Calu3 (cell line): ENCODE measurements at regions of chr12 and their contacts with region 1.

Region 1: GRCh38 chr12:22018860-22019259 is 27.2 kb upstream of the CMAS start:
- DNase-seq: no peak
- H3K4me3 Mint-ChIP-seq: no peak overlapping the region
- H3K27ac Mint-ChIP-seq: no peak overlapping the region
- H3K4me1 Mint-ChIP-seq: peaks cover 9% of the 10 kb centered on the region
- H3K27me3 Mint-ChIP-seq: no peaks in the 10 kb centered on the region
- CTCF ChIP-seq: peak; percentile 34

Region 2: DNA sequence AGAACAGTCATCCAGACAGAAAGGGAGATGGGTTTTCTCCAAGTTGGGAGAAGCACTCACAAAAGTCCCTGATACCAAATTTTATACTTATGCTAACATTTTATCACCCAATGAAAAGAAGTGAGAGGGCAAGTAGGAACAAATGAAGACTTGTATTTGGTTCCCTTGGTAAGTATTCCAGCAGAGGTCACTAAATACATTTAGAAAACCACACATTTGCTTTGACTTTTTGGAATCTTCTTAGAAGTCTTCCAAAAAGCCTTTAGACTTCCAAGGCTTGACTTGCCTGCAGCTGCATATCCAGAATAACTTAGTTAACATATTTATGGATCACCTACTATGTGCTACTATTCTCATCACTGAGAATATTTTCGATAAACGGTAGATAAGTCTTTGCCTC is 411.2 kb before region 1 on chr12:
- CTCF ChIA-PET with region 1: no interaction called
- intact Hi-C with region 1: loop called (anchors 10 kb)
- DNase-seq: no peak
- H3K4me3 Mint-ChIP-seq: no peak overlapping the region
- H3K27ac Mint-ChIP-seq: no peak overlapping the region
- H3K4me1 Mint-ChIP-seq: no peaks in the 10 kb centered on the region
- H3K27me3 Mint-ChIP-seq: no peaks in the 10 kb centered on the region
- CTCF ChIP-seq: no peak

Region 3: GRCh38 chr12:22551624-22552023 is 532.8 kb after region 1 on chr12:
- CTCF ChIA-PET with region 1: no interaction called
- intact Hi-C with region 1: no loop called
- DNase-seq: no peak
- H3K4me3 Mint-ChIP-seq: no peak overlapping the region
- H3K27ac Mint-ChIP-seq: no peak overlapping the region
- H3K4me1 Mint-ChIP-seq: no peaks in the 10 kb centered on the region
- H3K27me3 Mint-ChIP-seq: no peaks in the 10 kb centered on the region
- CTCF ChIP-seq: no peak